RWPE1 (cell line): ENCODE measurements at regions of chr11 and their contacts with region 1.

Region 1: DNA sequence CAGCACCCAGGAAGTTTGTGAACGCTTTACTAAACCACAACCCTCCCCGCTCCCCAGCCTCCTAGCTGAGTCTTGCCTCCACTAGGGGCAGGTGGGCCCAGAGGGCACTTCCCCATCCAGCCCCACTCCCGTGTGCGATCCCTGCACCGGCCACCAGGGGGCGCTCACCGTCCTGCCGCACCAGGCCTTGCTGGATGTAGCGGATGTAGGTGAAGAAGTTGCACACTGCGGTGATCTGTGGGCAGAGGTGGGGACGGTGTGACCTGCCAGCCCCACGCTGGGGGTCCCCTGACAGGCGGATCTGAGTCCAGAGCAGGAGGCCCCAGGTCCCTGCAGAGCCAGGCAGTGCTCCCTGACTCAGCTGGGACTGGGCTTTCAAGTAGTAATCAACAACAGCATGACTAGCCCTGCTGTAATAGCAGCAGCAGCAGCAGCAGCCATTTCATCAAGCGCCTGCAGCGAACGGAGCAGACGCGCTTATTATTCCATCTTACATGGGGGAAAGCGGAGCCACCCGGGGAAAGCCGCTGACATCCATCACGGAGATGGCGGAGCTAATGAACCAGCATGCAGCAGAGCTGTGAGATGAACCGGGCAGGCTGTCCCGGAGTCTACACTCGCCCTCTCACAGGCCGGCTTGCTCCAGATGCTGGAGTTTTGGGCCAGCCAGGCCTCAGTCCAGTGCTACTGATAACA is 7.9 kb upstream of the FADS3 start:
- DNase-seq: peak; percentile 86
- H3K27ac ChIP-seq: peak overlapping the region; percentile 90; the same call in 1 of the 2 replicates
- CTCF ChIP-seq: peak; percentile 98

Region 2: DNA sequence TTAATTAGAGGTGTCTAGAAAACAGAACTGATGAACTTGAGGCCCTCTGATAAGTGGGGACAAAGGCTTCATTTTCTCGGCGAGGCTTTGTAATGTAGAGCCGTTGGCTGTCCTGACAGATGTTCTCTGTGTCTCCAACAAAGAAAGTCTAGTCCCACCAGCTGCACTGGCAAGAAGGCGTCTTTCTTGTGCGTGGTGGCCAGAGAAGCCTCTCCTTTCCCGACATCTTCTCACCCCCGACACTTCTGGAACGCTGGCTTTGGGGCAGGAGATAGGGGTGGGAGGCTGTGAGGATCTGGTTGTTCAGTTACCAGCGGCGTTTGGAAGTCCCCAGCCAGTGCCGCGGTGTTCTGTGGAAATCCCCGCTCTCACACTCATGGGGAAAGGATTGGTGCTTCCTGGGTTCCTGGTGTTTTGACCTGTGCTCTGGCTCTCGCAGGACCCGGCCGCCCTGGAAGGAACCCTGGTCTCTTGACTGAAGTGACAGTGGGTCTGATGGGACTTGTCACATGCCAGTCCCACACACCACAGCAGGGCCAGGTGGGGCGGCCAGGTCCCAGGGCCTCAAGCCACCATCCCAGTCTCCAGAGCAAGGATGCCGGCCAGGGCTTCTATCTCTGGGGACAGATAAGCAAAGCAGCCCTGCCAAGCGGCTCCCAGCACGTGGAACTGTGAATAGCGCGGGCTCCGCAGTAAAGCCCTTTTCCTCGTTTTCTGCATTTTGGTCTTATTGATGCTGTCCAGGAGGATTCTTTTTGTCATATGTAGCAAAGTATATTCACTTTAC is 48.0 kb before region 1 on chr11:
- CTCF ChIA-PET with region 1: no interaction called
- POLR2A ChIA-PET with region 1: no interaction called
- DNase-seq: no peak
- H3K27ac ChIP-seq: peak overlapping the region; percentile 17
- CTCF ChIP-seq: no peak

Region 3: GRCh38 chr11:61888043-61888442 is 11.3 kb before region 1 on chr11:
- CTCF ChIA-PET with region 1: interaction called, 15 read pairs
- POLR2A ChIA-PET with region 1: no interaction called
- DNase-seq: peak; percentile 84
- H3K27ac ChIP-seq: peak overlapping the region; percentile 90
- CTCF ChIP-seq: no peak

Region 4: DNA sequence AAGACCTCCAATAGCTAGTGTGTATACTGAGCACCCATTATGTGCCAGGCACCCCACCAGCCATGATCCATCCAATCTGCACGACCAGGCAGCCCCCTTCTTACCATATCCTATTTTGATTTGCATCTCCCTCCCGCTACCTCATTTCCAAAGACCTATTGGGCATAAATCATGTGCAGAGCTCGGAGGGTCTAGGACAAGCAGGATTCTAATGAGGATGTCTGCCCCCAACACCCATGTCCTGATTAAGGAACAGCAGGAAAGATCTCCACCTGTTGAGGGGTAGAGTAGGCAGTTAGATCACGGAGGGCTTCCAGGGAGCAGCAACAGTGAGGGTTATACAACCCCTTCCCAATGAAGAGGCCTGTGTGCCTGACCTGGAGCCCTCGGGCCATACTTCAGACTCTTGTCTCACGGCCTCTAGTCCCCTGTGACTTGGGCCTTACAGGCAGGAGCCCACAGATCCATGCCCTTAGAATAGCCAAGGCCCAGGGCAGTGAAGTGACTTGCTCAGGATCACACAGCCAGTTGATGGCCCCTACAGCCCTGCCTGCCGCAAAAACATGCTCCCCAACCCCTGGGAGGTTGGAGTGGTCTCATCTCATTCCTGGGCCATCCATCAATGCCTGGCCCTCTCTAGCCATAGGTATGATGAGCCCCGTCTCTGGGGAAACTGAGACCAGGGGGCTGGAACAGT is 14.6 kb after region 1 on chr11:
- CTCF ChIA-PET with region 1: interaction called, 11 read pairs
- POLR2A ChIA-PET with region 1: no interaction called
- DNase-seq: no peak
- H3K27ac ChIP-seq: no peak overlapping the region
- CTCF ChIP-seq: no peak

Region 5: DNA sequence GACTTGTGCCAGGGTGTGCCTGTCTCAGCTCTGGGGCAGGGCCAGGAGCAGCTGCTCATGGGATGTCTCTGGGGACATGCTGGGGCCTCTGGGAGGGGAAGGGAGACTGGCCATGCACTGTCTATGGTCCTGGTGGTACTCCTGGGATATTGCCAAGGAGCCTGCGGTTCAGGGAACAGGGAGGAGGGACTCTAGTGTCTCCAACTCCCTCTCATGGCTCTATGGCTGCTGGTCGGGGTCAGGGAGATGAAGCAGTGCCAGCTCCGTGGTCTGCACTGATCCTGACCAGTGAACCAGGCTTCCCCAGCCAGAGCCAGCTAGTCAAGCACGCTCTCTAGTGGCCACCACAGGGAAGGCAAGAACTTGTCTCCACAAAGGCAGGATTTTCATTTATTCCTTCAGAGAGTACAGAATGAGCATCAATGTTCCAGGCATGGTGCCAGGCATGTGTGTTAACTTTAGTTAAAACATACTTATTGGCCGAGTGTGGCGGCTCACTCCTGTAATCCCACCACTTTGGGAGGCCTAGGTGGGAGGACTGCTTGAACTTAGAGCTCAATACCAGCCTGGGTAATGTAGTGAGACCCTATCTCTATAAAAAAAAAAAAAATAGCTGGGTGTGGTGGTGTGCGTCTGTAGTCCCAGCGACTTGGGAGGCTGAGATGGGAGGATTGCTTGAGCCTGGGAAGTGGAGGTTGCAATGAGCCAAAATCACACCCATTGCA is 48.4 kb after region 1 on chr11:
- CTCF ChIA-PET with region 1: interaction called, 62 read pairs
- POLR2A ChIA-PET with region 1: no interaction called
- DNase-seq: peak; percentile 81
- H3K27ac ChIP-seq: no peak overlapping the region
- CTCF ChIP-seq: peak; percentile 92

Region 6: GRCh38 chr11:62061351-62062222 is 162.3 kb after region 1 on chr11:
- CTCF ChIA-PET with region 1: interaction called, 31 read pairs
- POLR2A ChIA-PET with region 1: no interaction called
- DNase-seq: peak; percentile 32
- H3K27ac ChIP-seq: no peak overlapping the region
- CTCF ChIP-seq: peak; percentile 26

Region 7: GRCh38 chr11:62108017-62108750 is 208.9 kb after region 1 on chr11:
- CTCF ChIA-PET with region 1: interaction called, 14 read pairs
- POLR2A ChIA-PET with region 1: no interaction called
- DNase-seq: peak; percentile 59
- H3K27ac ChIP-seq: no peak overlapping the region
- CTCF ChIP-seq: peak; percentile 81